CD14-positive monocyte (primary cell): ENCODE measurements at regions of chr16 and their contacts with region 1.

Region 1: DNA sequence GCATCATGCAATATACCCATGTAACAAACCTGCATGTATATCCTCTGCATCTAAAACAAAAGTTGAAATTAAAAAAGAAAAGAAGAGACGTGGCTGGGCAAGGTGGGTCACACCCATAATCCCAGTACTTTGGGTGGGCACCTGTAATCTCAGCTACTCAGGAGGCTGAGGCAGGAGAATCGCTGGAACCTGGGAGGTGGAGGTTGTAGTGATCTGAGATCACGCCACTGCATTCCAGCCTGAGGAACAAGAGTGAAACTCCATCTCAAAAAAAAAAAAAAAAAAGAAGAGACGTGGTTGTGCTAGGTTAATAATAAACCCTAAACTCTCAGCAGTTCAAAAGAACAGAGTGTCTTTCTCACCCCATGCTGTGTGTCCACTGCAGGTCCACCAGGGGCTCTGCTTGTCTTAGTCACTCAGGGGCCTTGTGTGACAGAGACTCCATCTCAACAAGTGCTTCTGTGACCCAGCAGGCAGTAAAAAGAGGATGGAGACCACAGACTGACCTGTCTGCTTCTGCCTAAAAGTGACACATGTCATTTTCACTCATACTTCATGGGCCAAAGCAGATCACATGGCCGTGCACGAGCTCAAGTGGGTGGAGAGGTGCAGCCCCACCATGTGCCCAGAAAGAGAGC is 22.3 kb upstream of the N4BP1 start:
- DNase-seq: peak in 1 of 3 donors; percentile 32
- H3K4me3 ChIP-seq: no peak overlapping the region
- H3K4me3 Mint-ChIP-seq: no peak overlapping the region
- H3K27ac ChIP-seq: no peak overlapping the region
- H3K27ac Mint-ChIP-seq: peak overlapping the region in 1 of 7 donors; percentile 19
- H3K4me1 ChIP-seq: peaks cover 6 to 11% of the 10 kb centered on the region in 2 donors
- H3K4me1 Mint-ChIP-seq: peaks cover 10% of the 10 kb centered on the region
- H3K27me3 ChIP-seq: no peaks in the 10 kb centered on the region
- H3K27me3 Mint-ChIP-seq: peaks cover 0 to 5% (median under 1%) of the 10 kb centered on the region in 3 donors
- CTCF ChIP-seq: no peak

Region 2: DNA sequence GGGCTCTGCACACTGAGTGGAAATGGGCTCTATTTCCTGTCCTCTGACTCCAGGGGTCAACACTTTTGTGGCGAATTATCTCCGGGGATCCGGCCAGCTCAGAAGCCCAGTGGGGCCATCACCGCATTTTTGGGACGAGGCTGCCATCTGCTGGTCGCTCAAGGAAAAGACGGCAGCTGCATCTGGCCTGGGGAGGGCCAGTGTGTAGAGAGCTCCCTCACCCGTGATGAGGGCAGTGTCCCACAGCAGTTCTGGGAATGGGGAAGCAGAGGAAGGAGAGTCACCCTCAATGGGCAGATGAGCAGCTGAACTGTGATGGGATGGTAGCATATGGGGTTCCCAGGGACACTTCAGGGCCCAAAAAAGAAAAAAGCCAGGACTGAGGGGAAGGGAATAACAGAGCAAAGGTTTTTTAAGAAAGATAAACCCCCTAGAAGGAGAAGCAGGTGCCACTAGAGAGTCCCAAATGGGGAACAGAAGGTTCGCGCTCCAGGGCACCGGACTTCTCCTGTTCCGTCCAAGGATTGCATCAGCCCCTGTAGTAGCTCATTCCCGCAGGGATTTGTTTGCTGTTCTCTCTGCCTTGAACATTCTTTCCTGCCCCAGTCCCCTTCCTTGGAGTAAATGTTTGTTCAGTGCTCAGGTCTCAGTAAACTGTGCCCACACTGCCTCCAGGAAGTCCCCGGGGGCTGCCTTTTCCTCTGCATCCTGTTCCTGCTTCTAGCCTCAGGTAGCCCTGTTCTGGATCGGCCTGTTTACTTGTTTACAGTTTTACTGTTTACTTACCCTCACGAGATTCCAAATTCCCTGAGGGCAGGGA is 467.1 kb before region 1 on chr16:
- intact Hi-C with region 1: loop called in 1 of 2 experiments (anchors 10 kb)
- DNase-seq: peak; percentile 68 to 78 (median 72)
- H3K4me3 ChIP-seq: no peak overlapping the region
- H3K4me3 Mint-ChIP-seq: peak overlapping the region in 1 of 2 donors; percentile 1
- H3K27ac ChIP-seq: no peak overlapping the region
- H3K27ac Mint-ChIP-seq: peak overlapping the region in 6 of 7 donors; percentile 1 to 85 (median 73)
- H3K4me1 ChIP-seq: peaks cover 24 to 27% of the 10 kb centered on the region in 2 donors
- H3K4me1 Mint-ChIP-seq: peaks cover 33% of the 10 kb centered on the region
- H3K27me3 ChIP-seq: no peaks in the 10 kb centered on the region
- H3K27me3 Mint-ChIP-seq: peaks cover 2 to 10% (median 2%) of the 10 kb centered on the region in 3 donors
- CTCF ChIP-seq: peak; percentile 91